Activated CD4-positive, alpha-beta memory T cell treated with anti-CD3 and anti-CD28 coated beads, Interleukin-2, amount 10 ng/mL, durations not matched to agents 7 days and 5 days (primary cell): ENCODE measurements at regions of chr2 and their contacts with region 1.

Region 1: GRCh38 chr2:70043252-70043875 is 43.9 kb upstream of the PCBP1 start:
- DNase-seq: peak; percentile 89
- H3K4me3 Mint-ChIP-seq: peak overlapping the region; percentile 44
- H3K27ac Mint-ChIP-seq: peak overlapping the region; percentile 97
- H3K4me1 Mint-ChIP-seq: peaks cover 75% of the 10 kb centered on the region
- H3K27me3 Mint-ChIP-seq: no peaks in the 10 kb centered on the region

Region 2: DNA sequence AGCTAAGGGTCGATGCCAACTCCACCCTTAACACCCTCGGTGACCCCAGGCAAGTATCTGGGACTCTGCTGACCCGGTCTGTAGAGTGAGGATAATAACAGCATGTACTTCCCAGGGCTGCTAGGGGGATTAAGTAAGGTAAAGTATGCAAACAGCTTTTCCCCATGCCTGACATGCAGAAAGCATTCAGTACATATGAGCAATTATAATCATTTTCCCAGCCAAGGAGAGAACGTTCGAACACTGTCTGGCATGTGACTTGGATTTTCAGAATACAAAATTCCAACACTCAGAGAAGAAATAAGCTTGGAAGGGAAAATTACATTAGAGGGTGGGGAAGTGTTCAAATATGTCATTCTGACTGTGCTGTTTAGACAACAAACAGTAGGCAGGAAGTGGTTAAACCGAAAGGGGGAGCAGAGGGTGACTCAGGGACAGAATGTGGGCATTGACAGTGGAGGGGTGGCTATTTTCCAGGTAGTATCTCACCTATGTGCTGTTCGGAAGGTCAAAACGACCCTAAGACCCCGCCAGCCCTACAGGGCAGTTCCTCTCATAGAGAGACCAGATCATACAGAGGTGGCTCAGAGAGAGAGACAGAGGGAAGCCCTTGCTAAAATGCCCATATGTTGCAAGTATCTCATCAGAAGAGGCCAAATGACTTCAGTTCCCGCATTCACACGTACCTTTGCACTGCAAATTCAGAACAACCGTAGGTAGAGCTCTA is 96.8 kb before region 1 on chr2:
- CTCF ChIA-PET with region 1: interaction called, 17 read pairs
- POLR2A ChIA-PET with region 1: interaction called, 45 read pairs
- DNase-seq: peak; percentile 80
- H3K4me3 Mint-ChIP-seq: peak overlapping the region; percentile 12
- H3K27ac Mint-ChIP-seq: peak overlapping the region; percentile 94
- H3K4me1 Mint-ChIP-seq: peaks cover 56% of the 10 kb centered on the region
- H3K27me3 Mint-ChIP-seq: peaks cover 2% of the 10 kb centered on the region

Region 3: DNA sequence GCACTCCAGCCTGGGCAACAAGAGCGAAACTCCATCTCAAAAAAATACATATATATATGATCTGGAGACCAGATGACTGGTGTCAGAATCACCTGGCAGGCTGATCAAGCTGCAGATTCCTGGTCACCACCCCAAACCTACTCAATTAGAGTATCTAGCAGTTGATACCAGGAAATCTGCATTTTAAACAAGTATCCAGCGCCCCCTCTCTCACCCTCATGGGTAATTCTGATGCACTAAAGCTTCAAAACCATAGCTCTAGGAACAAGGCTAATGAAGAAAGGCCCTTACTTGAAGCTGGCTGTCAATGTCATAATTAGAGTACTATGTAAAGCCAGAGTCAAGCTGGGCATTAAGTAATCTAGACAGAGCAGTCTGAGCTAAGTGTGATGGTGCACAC is 18.9 kb after region 1 on chr2:
- CTCF ChIA-PET with region 1: interaction called, 49 read pairs
- POLR2A ChIA-PET with region 1: interaction called, 95 read pairs
- DNase-seq: no peak
- H3K4me3 Mint-ChIP-seq: no peak overlapping the region
- H3K27ac Mint-ChIP-seq: no peak overlapping the region
- H3K4me1 Mint-ChIP-seq: peaks cover 18% of the 10 kb centered on the region
- H3K27me3 Mint-ChIP-seq: no peaks in the 10 kb centered on the region

Region 4: DNA sequence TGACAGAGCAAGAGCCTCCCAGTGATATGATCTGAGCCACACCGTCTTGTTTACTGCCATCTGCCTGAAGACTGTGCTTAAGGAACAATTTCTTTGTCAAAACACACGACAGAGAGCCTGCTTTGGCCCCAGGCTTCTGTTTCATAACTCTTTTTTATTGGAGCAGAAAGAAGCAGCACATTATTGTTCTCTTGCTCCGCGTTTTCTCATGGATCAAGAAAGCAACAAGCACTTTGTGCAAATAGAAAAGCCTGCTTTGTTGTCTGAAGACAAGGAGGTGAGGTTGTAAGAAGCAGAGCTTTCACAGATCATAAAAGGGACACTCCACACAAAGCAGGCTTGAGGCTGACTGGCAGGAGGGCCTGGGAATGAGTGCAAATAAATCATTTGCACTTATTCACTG is 376.8 kb after region 1 on chr2:
- CTCF ChIA-PET with region 1: no interaction called
- POLR2A ChIA-PET with region 1: no interaction called
- DNase-seq: no peak
- H3K4me3 Mint-ChIP-seq: no peak overlapping the region
- H3K27ac Mint-ChIP-seq: no peak overlapping the region
- H3K4me1 Mint-ChIP-seq: no peaks in the 10 kb centered on the region
- H3K27me3 Mint-ChIP-seq: peaks cover 5% of the 10 kb centered on the region